PC-9 (cell line): ENCODE measurements at regions of chr12 and their contacts with region 1.

Region 1: GRCh38 chr12:46455648-46456352 is 83.2 kb upstream of the SLC38A2 start:
- DNase-seq: peak; percentile 78 to 100
- H3K4me3 ChIP-seq: peak overlapping the region; percentile 38; the same call in 1 of the 2 replicates
- H3K27ac ChIP-seq: peak overlapping the region; percentile 99
- H3K4me1 ChIP-seq: peaks cover 65% of the 10 kb centered on the region
- H3K27me3 ChIP-seq: no peaks in the 10 kb centered on the region
- CTCF ChIP-seq: no peak

Region 2: GRCh38 chr12:46219884-46220655 is 235.7 kb before region 1 on chr12:
- CTCF ChIA-PET with region 1: no interaction called
- POLR2A ChIA-PET with region 1: no interaction called
- intact Hi-C with region 1: loop called (anchors 1 kb)
- DNase-seq: peak; percentile 73 to 97
- H3K4me3 ChIP-seq: peak overlapping the region; percentile 7; the same call in 1 of the 2 replicates
- H3K27ac ChIP-seq: peak overlapping the region; percentile 85
- H3K4me1 ChIP-seq: peaks cover 53% of the 10 kb centered on the region
- H3K27me3 ChIP-seq: no peaks in the 10 kb centered on the region
- CTCF ChIP-seq: no peak

Region 3: DNA sequence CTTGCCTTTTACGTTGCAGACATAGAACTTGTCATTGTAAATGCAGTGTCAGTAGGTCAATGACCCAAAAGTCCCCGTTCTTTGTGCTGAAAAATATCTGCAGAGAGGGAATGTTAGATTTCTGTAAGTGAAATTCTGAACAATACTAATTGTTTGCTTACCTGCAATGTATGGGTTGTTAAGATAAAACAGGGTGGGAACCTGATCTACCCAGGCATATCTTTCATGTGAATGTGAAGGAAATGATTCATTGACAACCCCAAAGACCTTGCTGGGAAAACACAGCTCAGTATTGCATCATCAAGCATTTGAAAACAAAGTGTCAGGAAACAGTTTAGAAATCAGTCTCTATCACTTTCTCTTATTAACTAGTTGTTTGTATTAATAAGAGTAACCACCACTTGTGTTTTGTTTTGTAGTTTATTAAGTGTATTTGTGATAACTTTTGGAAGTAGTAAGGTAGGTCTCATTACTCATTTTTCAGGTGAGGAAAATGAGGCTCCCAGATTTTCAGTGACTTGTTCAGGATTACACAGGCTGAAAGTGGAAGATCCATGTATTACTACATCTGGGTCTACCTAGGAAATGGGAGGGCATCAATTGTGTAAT is 25.4 kb before region 1 on chr12:
- CTCF ChIA-PET with region 1: no interaction called
- POLR2A ChIA-PET with region 1: interaction called, 9 read pairs
- intact Hi-C with region 1: loop called (anchors 1 kb)
- DNase-seq: peak; percentile 28 to 98
- H3K4me3 ChIP-seq: peak overlapping the region; percentile 34; the same call in 1 of the 2 replicates
- H3K27ac ChIP-seq: peak overlapping the region; percentile 95
- H3K4me1 ChIP-seq: peaks cover 41% of the 10 kb centered on the region
- H3K27me3 ChIP-seq: no peaks in the 10 kb centered on the region
- CTCF ChIP-seq: no peak

Region 4: DNA sequence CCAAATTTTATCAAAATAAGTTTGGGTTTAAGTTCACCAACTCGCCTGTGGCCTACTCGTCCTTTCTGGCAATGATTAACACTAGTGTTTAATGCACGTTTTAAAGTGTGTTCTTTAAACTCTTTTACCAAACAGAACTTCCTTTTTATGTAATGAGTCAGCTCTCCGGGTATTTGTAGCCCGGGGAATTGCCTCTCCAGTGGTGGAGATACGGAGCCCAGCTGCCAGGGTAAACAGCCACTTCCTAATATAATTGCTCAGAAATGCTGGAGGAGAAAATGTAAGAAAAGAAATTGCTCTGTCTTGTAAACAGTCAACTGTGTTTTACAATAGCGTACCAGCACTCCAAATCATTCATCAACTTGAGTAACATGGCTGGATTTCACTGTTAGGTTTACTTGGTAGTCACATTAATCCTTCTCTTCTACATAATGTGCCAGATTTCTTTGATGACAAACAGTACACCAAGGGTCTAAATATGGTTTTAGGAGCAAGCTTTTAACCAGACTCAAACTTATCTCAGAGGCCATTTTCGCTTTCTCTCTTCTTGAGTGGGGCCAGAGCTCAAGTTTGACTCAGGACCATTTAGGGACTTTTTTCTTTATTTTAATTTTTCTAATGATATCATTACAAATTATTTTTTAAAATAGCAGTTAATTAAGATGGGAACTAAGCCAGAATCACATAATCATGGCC is 18.0 kb after region 1 on chr12:
- CTCF ChIA-PET with region 1: no interaction called
- POLR2A ChIA-PET with region 1: interaction called, 7 read pairs
- intact Hi-C with region 1: loop called (anchors 1 kb)
- DNase-seq: peak; percentile 68 to 91
- H3K4me3 ChIP-seq: peak overlapping the region; percentile 20; the same call in 1 of the 2 replicates
- H3K27ac ChIP-seq: peak overlapping the region; percentile 85
- H3K4me1 ChIP-seq: peaks cover 80% of the 10 kb centered on the region
- H3K27me3 ChIP-seq: no peaks in the 10 kb centered on the region
- CTCF ChIP-seq: no peak

Region 5: GRCh38 chr12:46492471-46493351 is 36.9 kb after region 1 on chr12:
- CTCF ChIA-PET with region 1: no interaction called
- POLR2A ChIA-PET with region 1: interaction called, 8 read pairs
- intact Hi-C with region 1: loop called (anchors 1 kb)
- DNase-seq: peak; percentile 25 to 88
- H3K4me3 ChIP-seq: peak overlapping the region; percentile 3; the same call in 1 of the 2 replicates
- H3K27ac ChIP-seq: peak overlapping the region; percentile 81
- H3K4me1 ChIP-seq: peaks cover 47% of the 10 kb centered on the region
- H3K27me3 ChIP-seq: no peaks in the 10 kb centered on the region
- CTCF ChIP-seq: no peak

Region 6: GRCh38 chr12:46546634-46547286 is 91.0 kb after region 1 on chr12:
- CTCF ChIA-PET with region 1: no interaction called
- POLR2A ChIA-PET with region 1: no interaction called
- intact Hi-C with region 1: loop called (anchors 1 kb)
- DNase-seq: peak in 1 of 2 experiments; percentile 62
- H3K4me3 ChIP-seq: no peak overlapping the region
- H3K27ac ChIP-seq: peak overlapping the region; percentile 88
- H3K4me1 ChIP-seq: peaks cover 33% of the 10 kb centered on the region
- H3K27me3 ChIP-seq: no peaks in the 10 kb centered on the region
- CTCF ChIP-seq: no peak